CD14-positive monocyte (primary cell): ENCODE measurements at regions of chr4 and their contacts with region 1.

Region 1: DNA sequence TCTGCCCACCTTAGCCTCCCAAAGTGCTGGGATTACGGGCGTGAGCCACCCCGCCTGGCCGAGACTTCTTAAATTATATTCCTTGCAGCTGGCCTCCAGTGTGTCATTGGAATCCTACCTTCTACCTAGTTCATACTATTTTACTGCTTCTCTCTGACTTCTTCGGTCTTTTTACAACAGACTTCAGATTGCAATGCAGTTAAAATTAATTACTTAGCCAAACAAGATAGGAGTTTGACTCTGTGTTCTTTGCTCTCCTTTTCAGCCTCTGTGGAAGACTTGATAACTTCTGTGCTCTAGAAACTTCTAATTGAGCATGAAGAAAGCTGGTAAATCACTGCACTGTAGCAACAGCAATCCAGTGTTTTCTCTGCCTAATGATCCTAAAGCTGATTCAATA is 199.5 kb downstream of the GASK1B start:
- DNase-seq: no peak
- H3K4me3 ChIP-seq: no peak overlapping the region
- H3K4me3 Mint-ChIP-seq: no peak overlapping the region
- H3K27ac ChIP-seq: no peak overlapping the region
- H3K27ac Mint-ChIP-seq: no peak overlapping the region
- H3K4me1 ChIP-seq: peaks cover 3 to 7% of the 10 kb centered on the region in 2 donors
- H3K4me1 Mint-ChIP-seq: peaks cover 11% of the 10 kb centered on the region
- H3K27me3 ChIP-seq: peaks cover 4 to 6% of the 10 kb centered on the region in 2 donors
- H3K27me3 Mint-ChIP-seq: peaks cover 3 to 6% (median 5%) of the 10 kb centered on the region in 3 donors
- CTCF ChIP-seq: no peak

Region 2: GRCh38 chr4:157217708-157218107 is 755.6 kb before region 1 on chr4:
- intact Hi-C with region 1: loop called in 1 of 2 experiments (anchors 5 kb)
- DNase-seq: no peak
- H3K4me3 ChIP-seq: no peak overlapping the region
- H3K4me3 Mint-ChIP-seq: no peak overlapping the region
- H3K27ac ChIP-seq: no peak overlapping the region
- H3K27ac Mint-ChIP-seq: no peak overlapping the region
- H3K4me1 ChIP-seq: no peaks in the 10 kb centered on the region
- H3K4me1 Mint-ChIP-seq: peaks cover 8% of the 10 kb centered on the region
- H3K27me3 ChIP-seq: peaks cover 31 to 40% of the 10 kb centered on the region in 2 donors
- H3K27me3 Mint-ChIP-seq: peaks cover 35 to 55% (median 38%) of the 10 kb centered on the region in 3 donors
- CTCF ChIP-seq: peak; percentile 35

Region 3: GRCh38 chr4:158079661-158080060 is 106.4 kb after region 1 on chr4:
- intact Hi-C with region 1: no loop called
- DNase-seq: no peak
- H3K4me3 ChIP-seq: no peak overlapping the region
- H3K4me3 Mint-ChIP-seq: no peak overlapping the region
- H3K27ac ChIP-seq: no peak overlapping the region
- H3K27ac Mint-ChIP-seq: no peak overlapping the region
- H3K4me1 ChIP-seq: no peaks in the 10 kb centered on the region
- H3K4me1 Mint-ChIP-seq: no peaks in the 10 kb centered on the region
- H3K27me3 ChIP-seq: no peaks in the 10 kb centered on the region
- H3K27me3 Mint-ChIP-seq: no peaks in the 10 kb centered on the region
- CTCF ChIP-seq: no peak

Region 4: GRCh38 chr4:158644760-158645159 is 671.5 kb after region 1 on chr4:
- intact Hi-C with region 1: no loop called
- DNase-seq: no peak
- H3K4me3 ChIP-seq: no peak overlapping the region
- H3K4me3 Mint-ChIP-seq: no peak overlapping the region
- H3K27ac ChIP-seq: no peak overlapping the region
- H3K27ac Mint-ChIP-seq: no peak overlapping the region
- H3K4me1 ChIP-seq: no peaks in the 10 kb centered on the region
- H3K4me1 Mint-ChIP-seq: peaks cover 3% of the 10 kb centered on the region
- H3K27me3 ChIP-seq: no peaks in the 10 kb centered on the region
- H3K27me3 Mint-ChIP-seq: no peaks in the 10 kb centered on the region
- CTCF ChIP-seq: no peak